Aorta (tissue), 5 donors: ENCODE measurements at regions of chr9 and their contacts with region 1.

Region 1: DNA sequence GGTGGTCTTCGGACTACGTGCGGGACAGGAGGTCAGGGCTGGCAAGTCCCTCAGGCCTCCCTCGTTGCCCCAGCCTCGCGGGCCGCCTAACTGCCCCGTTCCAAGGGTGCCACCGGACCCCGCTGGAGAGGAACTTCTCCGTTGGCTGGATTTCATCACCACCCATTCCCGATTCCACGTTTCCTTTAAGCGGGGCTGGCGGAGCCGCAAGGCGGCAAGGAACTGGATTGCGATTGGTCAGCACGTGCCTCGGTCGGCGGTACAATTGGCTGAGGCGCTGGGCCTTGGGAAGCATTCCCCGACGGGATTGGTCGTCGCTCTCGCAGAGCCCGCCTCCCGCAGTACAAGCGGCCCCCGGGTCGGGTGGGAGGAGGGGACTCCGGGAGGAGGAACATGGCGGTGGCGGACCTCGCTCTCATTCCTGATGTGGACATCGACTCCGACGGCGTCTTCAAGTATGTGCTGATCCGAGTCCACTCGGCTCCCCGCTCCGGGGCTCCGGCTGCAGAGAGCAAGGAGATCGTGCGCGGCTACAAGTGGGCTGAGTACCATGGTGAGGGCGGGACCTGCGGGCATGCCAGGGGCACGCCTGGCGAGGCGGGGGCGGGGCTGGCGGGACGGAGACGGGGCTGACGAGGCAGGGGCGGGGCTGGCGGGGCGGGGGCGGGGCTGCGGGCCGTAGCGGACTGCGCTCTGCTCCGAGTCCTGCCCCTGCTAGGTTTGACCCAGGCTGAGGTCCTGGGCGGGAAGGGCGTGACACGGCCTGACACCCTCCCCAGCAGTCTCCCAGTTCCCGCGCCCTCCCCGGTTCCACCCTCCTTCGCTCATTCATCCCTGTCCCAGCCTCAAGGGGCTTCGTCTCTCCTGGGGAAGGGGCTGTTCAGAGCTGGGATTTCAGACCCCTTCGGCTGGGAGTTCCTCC is at the start of gene PHPT1:
- DNase-seq: peak; percentile 99
- ATAC-seq: peak; percentile 95
- H3K4me3 ChIP-seq: peak within 1 kb of the TSS; percentile 52 to 83
- H3K27ac ChIP-seq: peak within 1 kb of the TSS in 1 of 2 donors; percentile 88
- H3K4me1 ChIP-seq: no peaks in the 10 kb centered on the region
- H3K27me3 ChIP-seq: no peaks in the 10 kb centered on the region
- total RNA-seq, gene PHPT1: 65.6 to 84.1 TPM

Region 2: GRCh38 chr9:136885950-136886578 is 36.8 kb after region 1 on chr9 and contains the start of gene TRAF2:
- intact Hi-C with region 1: loop called (anchors 2 to 5 kb)
- DNase-seq: peak; percentile 99
- ATAC-seq: peak; percentile 98
- H3K4me3 ChIP-seq: peak within 1 kb of the TSS; percentile 77 to 82
- H3K27ac ChIP-seq: no peak within 1 kb of the TSS
- H3K4me1 ChIP-seq: no peaks in the 10 kb centered on the region
- H3K27me3 ChIP-seq: no peaks in the 10 kb centered on the region
- total RNA-seq, gene TRAF2: 9.1 to 22.1 TPM

Region 3: DNA sequence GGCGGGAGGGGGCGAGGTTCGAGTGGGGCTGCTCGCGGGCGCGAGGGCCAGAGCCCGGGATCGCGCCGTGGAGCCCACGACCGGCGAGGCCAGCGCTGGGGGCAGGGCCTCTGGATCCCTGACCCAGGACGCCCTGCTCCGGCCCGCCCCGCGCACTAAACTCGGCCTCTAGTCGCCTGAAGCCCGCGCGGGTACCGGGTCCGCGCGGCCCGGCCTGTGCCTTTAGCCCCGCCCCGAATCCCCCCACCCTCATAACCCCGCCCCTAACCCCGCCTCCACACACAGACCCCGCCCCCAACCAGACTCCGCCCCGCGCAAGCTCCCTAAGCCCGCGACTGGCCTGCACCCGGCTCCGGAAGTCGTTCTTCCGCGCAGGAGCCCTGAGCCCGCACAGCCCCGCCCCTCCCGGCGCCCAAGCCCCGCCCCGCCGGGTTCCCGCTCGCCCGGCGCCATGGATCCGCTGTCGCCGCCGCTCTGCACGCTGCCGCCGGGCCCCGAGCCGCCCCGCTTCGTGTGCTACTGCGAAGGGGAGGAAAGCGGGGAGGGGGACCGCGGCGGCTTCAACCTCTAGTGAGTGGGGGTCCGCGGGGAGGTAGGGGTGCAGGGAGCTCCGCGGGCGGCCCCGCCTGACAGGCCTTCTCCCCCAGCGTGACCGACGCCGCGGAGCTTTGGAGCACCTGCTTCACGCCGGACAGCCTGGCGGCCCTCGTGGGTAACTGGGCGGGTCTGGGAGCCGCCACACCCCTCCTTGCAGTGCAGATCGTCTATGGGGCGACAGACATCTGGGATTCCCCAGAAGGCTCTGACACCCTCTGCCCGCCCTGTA is 142.9 kb after region 1 on chr9 and contains the start of gene PAXX:
- intact Hi-C with region 1: loop called in 1 of 2 experiments (anchors 10 kb)
- DNase-seq: peak; percentile 96 to 98
- ATAC-seq: peak; percentile 94
- H3K4me3 ChIP-seq: peak within 1 kb of the TSS; percentile 65 to 85
- H3K27ac ChIP-seq: no peak within 1 kb of the TSS
- H3K4me1 ChIP-seq: peaks cover 0 to 4% of the 10 kb centered on the region in 2 donors
- H3K27me3 ChIP-seq: no peaks in the 10 kb centered on the region
- total RNA-seq, gene PAXX: 27.8 to 42.0 TPM